Tibial artery (tissue), 4 donors: ENCODE measurements at regions of chr11 and their contacts with region 1.

Region 1: GRCh38 chr11:64787526-64788320 is 9.4 kb upstream of the SF1 start:
- DNase-seq: peak in 1 of 2 donors; percentile 43
- H3K4me3 ChIP-seq: no peak overlapping the region
- H3K27ac ChIP-seq: no peak overlapping the region
- H3K4me1 ChIP-seq: no peaks in the 10 kb centered on the region
- H3K27me3 ChIP-seq: no peaks in the 10 kb centered on the region
- CTCF ChIP-seq: peak; percentile 53 to 56

Region 2: GRCh38 chr11:63986156-63986931 is 801.4 kb before region 1 on chr11 and contains the start of gene OTUB1:
- intact Hi-C with region 1: no loop called
- DNase-seq: peak; percentile 90 to 94
- H3K4me3 ChIP-seq: peak within 1 kb of the TSS; percentile 69 to 97
- H3K27ac ChIP-seq: peak within 1 kb of the TSS; percentile 77 to 88
- H3K4me1 ChIP-seq: peaks cover 0 to 23% (median 18%) of the 10 kb centered on the region in 4 donors
- H3K27me3 ChIP-seq: no peaks in the 10 kb centered on the region
- CTCF ChIP-seq: no peak

Region 3: GRCh38 chr11:64894070-64894796 is 106.5 kb after region 1 on chr11:
- intact Hi-C with region 1: loop called (anchors 5 kb)
- DNase-seq: peak; percentile 74 to 87
- H3K4me3 ChIP-seq: no peak overlapping the region
- H3K27ac ChIP-seq: no peak overlapping the region
- H3K4me1 ChIP-seq: no peaks in the 10 kb centered on the region
- H3K27me3 ChIP-seq: no peaks in the 10 kb centered on the region
- CTCF ChIP-seq: peak; percentile 82 to 91

Region 4: DNA sequence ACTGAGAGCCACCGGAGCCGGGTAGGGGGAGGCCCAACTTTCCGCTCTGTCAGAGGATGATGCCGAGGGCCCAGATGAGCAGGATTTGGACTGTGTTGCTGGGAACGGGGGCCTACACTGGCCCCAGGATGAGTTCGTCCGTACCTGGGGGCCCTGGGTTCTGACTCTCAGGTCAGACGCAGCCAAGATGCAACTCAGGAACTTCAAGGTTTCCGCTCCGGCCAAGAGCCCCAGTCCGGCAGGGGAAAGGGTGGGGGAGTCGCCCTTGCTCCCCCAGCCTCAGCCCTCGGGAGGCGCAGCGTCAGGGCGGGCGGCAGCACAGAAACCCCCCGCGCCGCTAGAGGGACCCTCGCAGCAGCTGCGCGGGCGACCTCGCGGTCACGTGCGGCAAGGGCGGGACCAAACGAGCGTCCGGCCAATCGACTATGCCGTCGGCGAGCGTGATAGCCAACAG is 226.0 kb after region 1 on chr11:
- intact Hi-C with region 1: no loop called
- DNase-seq: peak; percentile 89 to 95
- H3K4me3 ChIP-seq: peak overlapping the region; percentile 68 to 70
- H3K27ac ChIP-seq: peak overlapping the region; percentile 94 to 95
- H3K4me1 ChIP-seq: peaks cover 6 to 23% (median 19%) of the 10 kb centered on the region in 4 donors
- H3K27me3 ChIP-seq: no peaks in the 10 kb centered on the region
- CTCF ChIP-seq: peak in 1 of 2 experiments; percentile 89